Astrocyte of the cerebellum (primary cell): ENCODE measurements at regions of chr2 and their contacts with region 1.

Region 1: GRCh38 chr2:226791487-226792081 is 8.0 kb downstream of the IRS1 start:
- DNase-seq: no peak
- H3K4me3 ChIP-seq: peak overlapping the region; percentile 88
- CTCF ChIP-seq: no peak

Region 2: DNA sequence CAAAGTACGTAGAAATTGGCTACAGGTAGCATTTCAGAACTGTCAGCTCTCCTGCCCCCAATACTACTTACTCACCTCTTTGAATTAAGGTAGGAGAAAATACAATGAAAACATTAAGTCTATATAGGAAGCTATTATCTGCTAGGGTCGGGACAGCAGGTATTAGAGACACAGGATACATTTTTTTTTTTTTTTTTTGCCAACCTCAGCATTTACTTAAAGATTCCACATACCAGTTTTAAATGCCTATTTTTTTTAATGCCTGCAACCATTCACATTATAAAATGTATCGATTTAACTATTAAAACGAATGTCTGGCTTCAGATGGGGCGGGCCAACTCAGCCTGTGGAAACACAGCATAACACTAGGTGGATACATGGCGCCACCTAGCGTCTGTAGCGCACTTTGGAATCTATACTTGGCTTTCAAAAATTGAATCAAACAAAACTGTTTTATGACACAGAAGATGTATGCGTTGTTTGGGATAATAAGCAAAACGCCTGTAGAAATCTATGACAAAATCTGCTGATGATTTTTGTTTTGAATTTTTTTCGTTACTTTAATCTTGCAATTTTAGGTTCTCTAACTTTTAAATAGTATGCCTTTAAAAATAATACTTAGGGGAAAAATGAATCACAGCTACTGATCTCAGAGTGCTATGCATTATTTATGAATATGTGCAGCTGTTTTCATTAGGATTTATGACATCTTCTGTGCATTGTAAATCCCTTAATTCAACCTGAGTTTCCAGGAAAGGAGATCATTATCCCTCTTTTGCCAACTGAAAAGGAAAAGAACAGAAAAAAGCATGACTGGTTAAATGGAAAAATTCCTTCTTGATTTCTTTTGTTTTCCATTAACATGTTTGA is 1131.1 kb before region 1 on chr2:
- in situ Hi-C with region 1: loop called (anchors 25 kb)
- DNase-seq: peak; percentile 52
- H3K4me3 ChIP-seq: no peak overlapping the region
- CTCF ChIP-seq: peak; percentile 88

Region 3: DNA sequence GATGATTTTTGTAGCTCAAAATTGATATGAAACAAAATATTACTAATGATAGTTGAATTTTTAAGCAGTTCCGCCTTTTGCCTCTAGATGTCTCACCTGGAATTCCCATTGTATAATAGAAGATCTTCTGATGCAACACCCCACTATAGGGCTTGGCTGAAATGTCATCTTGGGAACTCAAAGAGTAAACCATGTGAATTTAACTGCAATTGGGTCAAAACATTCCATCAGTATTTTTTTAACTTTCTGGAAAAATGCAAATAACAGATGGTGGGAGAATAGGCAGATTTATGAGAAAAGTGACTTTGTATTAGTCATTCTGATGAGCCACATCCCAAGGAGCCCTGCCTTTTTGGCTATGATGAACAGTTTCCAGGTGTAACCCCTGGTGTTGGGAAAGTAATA is 902.1 kb before region 1 on chr2:
- in situ Hi-C with region 1: loop called (anchors 25 kb)
- DNase-seq: peak; percentile 70
- H3K4me3 ChIP-seq: no peak overlapping the region
- CTCF ChIP-seq: peak; percentile 74

Region 4: GRCh38 chr2:226215902-226216503 is 575.6 kb before region 1 on chr2:
- in situ Hi-C with region 1: loop called (anchors 25 kb)
- DNase-seq: peak; percentile 18
- H3K4me3 ChIP-seq: no peak overlapping the region
- CTCF ChIP-seq: peak; percentile 68

Region 5: GRCh38 chr2:226690461-226691024 is 101.0 kb before region 1 on chr2:
- in situ Hi-C with region 1: loop called (anchors 5 kb)
- DNase-seq: no peak
- H3K4me3 ChIP-seq: no peak overlapping the region
- CTCF ChIP-seq: no peak

Region 6: GRCh38 chr2:226743915-226744314 is 47.7 kb before region 1 on chr2:
- in situ Hi-C with region 1: no loop called
- DNase-seq: peak; percentile 33
- H3K4me3 ChIP-seq: no peak overlapping the region
- CTCF ChIP-seq: no peak